ENCODE measurements at regions of chr15 and their contacts with region 1.

Region 1: DNA sequence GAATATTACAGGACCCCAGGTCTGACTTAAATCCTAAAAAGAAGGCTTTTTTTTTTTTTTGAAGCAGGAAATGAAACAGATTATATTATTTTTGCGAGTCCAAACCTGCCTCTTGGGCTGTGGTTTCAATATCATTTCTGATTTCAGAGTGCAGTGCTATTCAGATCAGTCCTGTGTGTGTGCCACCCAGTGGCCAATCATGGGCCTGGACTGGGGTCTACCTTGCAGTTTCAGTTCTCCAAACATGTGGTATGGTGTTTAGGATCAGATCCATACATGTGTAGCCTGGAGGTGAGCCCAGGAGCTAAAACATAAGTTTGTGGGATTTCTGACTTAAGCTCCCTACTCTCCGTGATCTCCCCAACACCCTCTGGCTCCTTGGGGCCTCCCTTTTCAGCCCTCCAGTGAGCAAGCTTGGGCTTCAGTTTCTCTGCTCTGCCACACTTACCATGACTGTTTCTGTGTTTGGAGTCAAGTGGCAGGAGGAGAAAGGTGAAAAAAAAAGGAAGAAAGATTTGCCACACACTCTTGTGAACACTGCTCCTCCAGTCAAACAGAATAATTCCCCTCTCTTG is 12.1 kb upstream of the THSD4 start:
- DNase-seq: no peak
- ATAC-seq: peak; percentile 86
- H3K4me3 Mint-ChIP-seq: no peak overlapping the region
- H3K27ac Mint-ChIP-seq: no peak overlapping the region
- H3K4me1 Mint-ChIP-seq: peaks cover 17% of the 10 kb centered on the region
- H3K27me3 Mint-ChIP-seq: peaks cover 6% of the 10 kb centered on the region; the same call in 1 of the 2 replicates
- CTCF ChIP-seq: no peak

Region 2: GRCh38 chr15:71011503-71012155 is 91.6 kb before region 1 on chr15:
- CTCF ChIA-PET with region 1: interaction called, 12 read pairs
- POLR2A ChIA-PET with region 1: no interaction called
- DNase-seq: no peak
- ATAC-seq: peak; percentile 80
- H3K4me3 Mint-ChIP-seq: no peak overlapping the region
- H3K27ac Mint-ChIP-seq: no peak overlapping the region
- H3K4me1 Mint-ChIP-seq: no peaks in the 10 kb centered on the region
- H3K27me3 Mint-ChIP-seq: no peaks in the 10 kb centered on the region
- CTCF ChIP-seq: no peak

Region 3: DNA sequence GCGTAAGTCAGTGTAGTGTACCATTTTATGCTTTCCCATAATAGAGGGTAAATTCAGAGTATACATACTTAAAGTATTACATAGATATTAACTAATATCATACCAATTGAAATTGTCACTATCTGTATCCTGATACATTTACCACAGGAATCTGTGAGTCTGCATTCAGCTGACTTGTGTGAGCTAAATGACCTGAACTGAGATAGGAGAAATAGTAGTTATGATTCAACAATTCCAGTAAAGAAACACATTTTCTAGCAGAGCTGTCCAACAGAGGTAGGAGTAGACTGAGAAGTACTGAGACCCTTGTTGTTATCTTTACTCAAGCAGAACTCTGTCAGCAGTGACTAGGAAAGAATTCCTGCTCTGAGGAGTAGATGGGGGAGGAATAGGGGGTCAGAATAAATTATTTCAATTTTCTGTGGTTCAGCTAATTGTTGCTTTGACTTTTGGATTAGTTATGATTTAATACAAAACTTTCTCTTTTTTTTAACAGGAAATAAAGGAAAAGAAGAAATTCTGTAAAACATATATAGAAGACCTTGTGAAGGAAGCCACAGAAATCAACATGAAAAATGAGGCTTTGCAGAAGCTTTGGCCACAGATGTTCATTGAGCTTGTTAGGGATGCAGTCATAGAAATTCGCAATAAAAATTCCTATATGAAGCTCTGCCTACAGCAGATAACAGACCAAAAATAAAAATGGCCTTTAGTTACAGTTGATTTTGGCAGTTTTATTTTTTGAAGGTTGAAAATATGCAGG is 54.1 kb before region 1 on chr15:
- CTCF ChIA-PET with region 1: no interaction called
- POLR2A ChIA-PET with region 1: no interaction called
- DNase-seq: no peak
- ATAC-seq: no peak
- H3K4me3 Mint-ChIP-seq: no peak overlapping the region
- H3K27ac Mint-ChIP-seq: peak overlapping the region; percentile 21; the same call in 1 of the 2 replicates
- H3K4me1 Mint-ChIP-seq: peaks cover 21% of the 10 kb centered on the region
- H3K27me3 Mint-ChIP-seq: no peaks in the 10 kb centered on the region
- CTCF ChIP-seq: no peak

Measured in WTC11 (cell line).